PC-3 (cell line): ENCODE measurements at regions of chr12 and their contacts with region 1.

Region 1: DNA sequence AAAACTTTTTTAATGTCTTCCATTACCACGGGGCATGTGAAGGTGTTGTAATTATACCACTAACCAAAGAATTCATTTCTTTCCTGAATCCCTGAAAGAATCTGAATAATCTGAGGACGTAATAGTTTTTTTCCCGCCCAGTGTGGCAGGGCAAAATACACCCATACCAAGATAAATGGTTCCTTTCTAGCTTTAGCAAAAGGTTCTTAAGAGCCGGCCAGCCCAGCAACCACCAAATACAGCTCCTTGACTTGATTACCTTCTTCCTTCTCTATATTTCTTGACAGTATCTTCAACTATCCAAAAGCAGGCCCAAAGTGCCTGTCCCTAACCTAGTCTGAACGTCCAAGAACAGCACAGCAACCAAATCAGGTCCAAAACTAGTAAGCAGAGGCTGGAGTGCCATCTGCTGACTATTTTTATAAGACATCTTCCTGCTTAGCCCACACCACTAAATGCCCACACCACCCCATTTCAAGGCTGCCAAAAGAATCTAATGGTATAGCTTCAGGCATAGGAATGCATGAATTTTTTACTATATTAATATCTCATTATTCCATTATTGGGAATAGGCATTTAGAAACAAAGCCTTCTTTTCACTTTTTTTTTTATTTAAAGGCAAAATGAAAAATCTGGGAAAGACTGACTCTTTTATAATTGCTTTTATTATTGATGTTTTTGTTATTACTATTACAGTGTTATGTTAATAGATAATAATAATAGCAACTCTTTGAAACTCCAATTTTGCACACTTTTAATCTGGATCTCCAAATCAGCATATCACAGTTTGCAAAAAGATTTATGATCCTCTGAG is 524.4 kb downstream of the MED13L start:
- DNase-seq: peak; percentile 89
- ATAC-seq: peak; percentile 83
- H3K4me3 ChIP-seq: no peak overlapping the region
- H3K27ac ChIP-seq: no peak overlapping the region
- H3K4me1 ChIP-seq: peaks cover 9% of the 10 kb centered on the region; the same call in 1 of the 2 replicates
- H3K27me3 ChIP-seq: peaks cover 58% of the 10 kb centered on the region
- CTCF ChIP-seq: peak; percentile 88

Region 2: GRCh38 chr12:114625294-114625851 is 1127.7 kb before region 1 on chr12:
- CTCF ChIA-PET with region 1: interaction called, 3 read pairs
- POLR2A ChIA-PET with region 1: no interaction called
- intact Hi-C with region 1: loop called (anchors 1 kb)
- DNase-seq: peak; percentile 74
- ATAC-seq: peak; percentile 96
- H3K4me3 ChIP-seq: no peak overlapping the region
- H3K27ac ChIP-seq: no peak overlapping the region
- H3K4me1 ChIP-seq: no peaks in the 10 kb centered on the region
- H3K27me3 ChIP-seq: peaks cover 19% of the 10 kb centered on the region; the same call in 1 of the 2 replicates
- CTCF ChIP-seq: peak; percentile 98

Region 3: GRCh38 chr12:114913871-114914801 is 839.0 kb before region 1 on chr12:
- CTCF ChIA-PET with region 1: interaction called, 7 read pairs
- POLR2A ChIA-PET with region 1: no interaction called
- intact Hi-C with region 1: loop called (anchors 10 kb)
- DNase-seq: peak; percentile 94
- ATAC-seq: peak; percentile 50
- H3K4me3 ChIP-seq: no peak overlapping the region; the same call in 1 of the 2 replicates
- H3K27ac ChIP-seq: peak overlapping the region; percentile 57
- H3K4me1 ChIP-seq: peaks cover 67% of the 10 kb centered on the region
- H3K27me3 ChIP-seq: no peaks in the 10 kb centered on the region
- CTCF ChIP-seq: no peak

Region 4: DNA sequence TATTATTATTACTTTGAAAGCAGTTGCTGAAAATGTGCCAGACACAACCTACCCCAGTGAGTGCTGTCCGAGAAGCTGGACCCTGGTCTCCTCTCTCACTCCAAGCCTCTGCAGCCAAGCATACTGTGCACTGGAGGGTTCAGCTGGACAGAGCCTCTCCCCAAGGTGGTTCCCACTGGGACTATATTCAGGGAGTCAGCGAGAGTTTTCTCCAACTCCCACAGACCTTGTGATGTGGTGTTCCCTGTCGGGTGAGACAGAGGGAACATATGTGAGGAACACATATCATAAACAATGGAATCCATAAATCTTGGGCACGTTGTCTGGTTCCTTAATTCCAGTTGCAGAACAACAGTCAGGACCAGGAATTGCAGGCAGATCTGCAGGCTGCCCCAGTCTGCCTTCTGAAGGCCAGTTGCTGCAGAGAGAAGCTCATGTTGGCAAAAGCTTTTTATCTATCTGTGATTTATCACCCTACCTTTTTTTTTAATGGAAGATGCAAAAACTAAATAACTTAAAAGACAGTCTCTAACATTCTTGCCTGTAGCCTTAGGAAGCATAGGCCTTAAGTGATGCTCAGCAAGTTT is 449.3 kb before region 1 on chr12:
- CTCF ChIA-PET with region 1: interaction called, 5 read pairs
- POLR2A ChIA-PET with region 1: interaction called, 13 read pairs
- intact Hi-C with region 1: no loop called
- DNase-seq: no peak
- ATAC-seq: no peak
- H3K4me3 ChIP-seq: no peak overlapping the region
- H3K27ac ChIP-seq: no peak overlapping the region
- H3K4me1 ChIP-seq: peaks cover 11% of the 10 kb centered on the region
- H3K27me3 ChIP-seq: no peaks in the 10 kb centered on the region
- CTCF ChIP-seq: no peak

Region 5: DNA sequence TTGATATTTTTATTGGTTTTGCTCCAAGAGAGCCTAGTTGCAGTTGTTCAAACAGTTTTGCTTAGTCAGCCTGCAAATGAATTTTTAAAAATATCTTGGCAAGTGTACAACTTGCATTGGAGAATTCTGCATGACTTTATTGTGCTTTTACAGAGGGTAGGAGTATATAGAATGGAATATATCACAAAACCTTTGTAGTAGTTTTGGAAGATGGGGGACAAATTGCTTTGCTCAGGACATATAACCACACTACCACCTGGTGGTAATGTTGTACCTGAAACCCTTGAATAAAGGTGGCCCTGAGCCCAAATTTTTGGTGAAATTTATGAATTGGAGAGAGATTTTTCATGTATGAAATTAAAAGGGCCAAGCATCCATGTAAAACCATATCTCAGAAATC is 120.8 kb before region 1 on chr12:
- CTCF ChIA-PET with region 1: no interaction called
- POLR2A ChIA-PET with region 1: no interaction called
- intact Hi-C with region 1: loop called (anchors 1 kb)
- DNase-seq: peak; percentile 67
- ATAC-seq: peak; percentile 55; the same call in 1 of the 2 replicates
- H3K4me3 ChIP-seq: no peak overlapping the region
- H3K27ac ChIP-seq: no peak overlapping the region
- H3K4me1 ChIP-seq: no peaks in the 10 kb centered on the region
- H3K27me3 ChIP-seq: no peaks in the 10 kb centered on the region
- CTCF ChIP-seq: peak; percentile 78